Left cardiac atrium (tissue), 4 donors: ENCODE measurements at regions of chr17 and their contacts with region 1.

Region 1: GRCh38 chr17:57662644-57663308 is 82.3 kb downstream of the CCDC182 start:
- DNase-seq: peak; percentile 98
- ATAC-seq: peak; percentile 98 to 99

Region 2: GRCh38 chr17:57234751-57235117 is 428.0 kb before region 1 on chr17:
- intact Hi-C with region 1: no loop called
- DNase-seq: no peak
- ATAC-seq: no peak

Region 3: DNA sequence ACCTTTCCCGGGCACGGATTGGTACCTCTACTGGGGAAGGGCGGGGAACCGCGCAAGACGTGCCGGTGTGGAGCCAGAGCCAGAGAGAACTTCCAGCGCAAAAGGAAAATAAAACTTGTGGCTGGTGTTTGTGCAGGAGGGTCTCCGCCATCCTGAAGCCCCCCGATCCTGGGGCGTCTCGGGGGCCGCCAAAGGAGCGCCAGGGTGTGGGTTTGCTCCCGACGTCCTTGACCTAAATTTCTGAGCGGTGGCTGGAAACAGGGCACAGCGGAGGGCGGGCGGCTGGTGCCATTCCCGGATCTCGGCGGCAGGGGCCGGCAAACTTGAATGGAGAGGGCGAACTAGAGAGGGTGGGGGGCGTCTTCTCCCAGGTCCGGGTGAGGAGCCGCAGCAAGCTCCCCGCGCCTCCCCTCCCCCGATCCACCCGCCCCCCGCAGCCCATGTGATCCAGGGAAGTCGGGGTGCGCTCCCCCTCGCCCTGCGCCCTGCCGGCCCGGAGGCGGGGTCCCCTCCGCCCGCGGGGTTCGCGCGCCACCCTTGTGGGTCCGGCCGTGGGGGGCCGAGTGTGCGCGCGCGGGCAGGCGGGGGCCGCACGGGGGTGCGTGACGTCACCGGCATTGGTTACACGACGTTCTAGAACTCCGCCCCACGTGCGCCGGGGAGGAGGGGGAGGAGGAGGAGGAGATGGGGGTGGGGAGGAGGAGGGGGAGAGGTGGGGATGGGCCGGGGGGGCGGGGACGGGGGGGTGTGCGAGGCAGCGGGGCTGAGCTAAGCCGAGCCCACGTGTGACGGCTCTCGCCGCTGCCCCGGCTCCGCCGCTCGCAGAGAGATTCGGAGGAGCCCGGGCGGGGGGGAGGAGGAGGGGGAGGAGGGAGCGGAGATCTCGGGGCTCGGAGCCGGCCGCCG is 406.7 kb before region 1 on chr17 and contains the start of gene MSI2:
- intact Hi-C with region 1: loop called in 1 of 2 experiments (anchors 10 kb)
- DNase-seq: peak; percentile 97
- ATAC-seq: peak; percentile 91 to 93
- total RNA-seq, gene MSI2: 84.1 to 95.5 TPM

Region 4: DNA sequence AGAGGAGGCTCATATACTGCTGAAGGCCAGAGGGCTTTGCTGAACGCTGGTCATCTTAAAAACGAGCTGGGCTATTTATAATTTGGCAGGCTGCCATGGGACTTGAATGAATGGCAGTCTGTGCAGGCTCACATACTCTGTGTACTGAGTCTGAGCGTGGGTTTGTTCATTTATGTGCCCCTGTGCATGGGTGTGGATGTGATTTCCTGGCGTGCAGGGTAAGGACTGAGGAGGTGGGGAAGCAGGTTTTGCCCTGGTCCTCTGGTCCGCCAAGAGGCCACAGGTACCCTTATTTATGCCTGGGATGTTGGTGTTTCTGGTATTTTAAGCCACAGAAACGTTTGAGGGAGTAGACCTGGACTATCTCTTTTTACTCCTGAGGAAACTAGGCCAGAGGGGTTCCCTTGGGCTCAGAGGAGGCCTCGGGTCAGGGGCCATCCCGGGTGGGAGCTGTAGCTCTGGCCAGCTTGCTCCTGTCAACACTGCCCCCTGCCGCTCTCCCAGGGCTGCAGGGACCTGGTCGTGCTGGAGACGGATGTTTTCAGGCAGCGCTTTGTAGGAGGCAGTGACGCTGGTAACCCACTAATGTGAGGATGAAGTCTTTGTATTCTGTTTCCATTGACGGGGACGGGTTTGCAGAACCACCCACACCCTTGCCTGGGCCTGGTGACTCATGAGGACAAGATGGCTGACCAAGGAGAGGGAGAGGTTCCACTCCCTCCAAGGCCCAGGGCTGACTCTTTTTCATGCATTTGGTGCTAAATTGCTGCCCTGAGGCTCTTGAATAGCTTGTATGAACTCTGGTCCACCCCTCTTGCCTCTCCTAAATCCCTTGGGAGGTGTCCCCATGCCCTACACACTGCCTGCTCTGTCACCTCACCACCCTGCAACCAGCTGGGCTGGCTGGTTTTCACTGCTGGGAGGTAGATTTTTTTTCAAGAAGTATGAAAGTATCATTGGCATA is 222.0 kb before region 1 on chr17:
- intact Hi-C with region 1: loop called in 1 of 2 experiments (anchors 10 kb)
- DNase-seq: peak; percentile 87
- ATAC-seq: peak; percentile 67 to 86

Region 5: DNA sequence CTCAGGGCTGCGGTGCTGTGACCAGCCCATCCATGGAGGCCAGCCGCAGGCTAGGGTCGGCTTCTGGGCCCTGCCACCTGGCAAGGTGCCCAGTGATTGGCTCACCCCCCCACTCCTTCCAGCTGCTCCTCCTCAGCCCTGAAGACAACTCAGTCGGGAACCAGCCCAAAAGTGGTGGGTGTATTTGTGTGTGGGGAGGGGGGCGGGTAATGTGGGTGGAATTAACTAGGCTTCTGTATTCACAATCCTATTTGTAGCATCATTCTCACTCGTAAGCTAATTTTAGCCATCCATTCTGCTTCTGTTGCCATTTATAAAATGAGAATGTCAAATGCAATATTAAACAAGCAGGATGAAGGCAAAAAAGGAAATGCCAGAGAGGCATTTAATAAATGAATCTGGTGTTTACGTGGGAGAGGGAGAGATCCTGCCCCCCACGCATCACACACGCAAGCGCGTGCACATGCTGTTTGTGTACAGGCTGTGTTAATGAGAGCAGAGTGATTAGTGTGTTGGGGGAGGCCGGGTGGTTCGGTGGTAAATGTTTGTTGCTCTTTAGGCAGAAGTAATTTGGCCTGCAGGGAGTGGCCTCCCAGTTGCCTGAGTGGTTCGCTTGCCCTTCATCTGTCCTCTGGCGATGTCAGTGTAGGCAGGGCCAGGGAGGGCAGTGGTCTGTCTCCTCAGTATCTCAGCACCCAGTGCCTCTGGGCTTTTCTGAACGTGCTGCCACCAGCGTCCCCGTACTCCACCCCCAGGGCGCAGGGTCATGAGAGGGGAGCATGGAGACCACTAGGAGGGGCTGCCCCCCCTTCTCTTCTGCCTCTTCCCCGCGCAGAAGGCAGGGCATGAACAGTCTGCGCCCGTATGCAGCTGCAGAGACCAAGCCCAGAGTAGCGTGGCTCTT is 57.8 kb before region 1 on chr17:
- intact Hi-C with region 1: loop called in 1 of 2 experiments (anchors 5 kb)
- DNase-seq: peak; percentile 49
- ATAC-seq: peak; percentile 76 to 78